Mucosa of descending colon (tissue), 3 donors: ENCODE measurements at regions of chr12 and their contacts with region 1.

Region 1: DNA sequence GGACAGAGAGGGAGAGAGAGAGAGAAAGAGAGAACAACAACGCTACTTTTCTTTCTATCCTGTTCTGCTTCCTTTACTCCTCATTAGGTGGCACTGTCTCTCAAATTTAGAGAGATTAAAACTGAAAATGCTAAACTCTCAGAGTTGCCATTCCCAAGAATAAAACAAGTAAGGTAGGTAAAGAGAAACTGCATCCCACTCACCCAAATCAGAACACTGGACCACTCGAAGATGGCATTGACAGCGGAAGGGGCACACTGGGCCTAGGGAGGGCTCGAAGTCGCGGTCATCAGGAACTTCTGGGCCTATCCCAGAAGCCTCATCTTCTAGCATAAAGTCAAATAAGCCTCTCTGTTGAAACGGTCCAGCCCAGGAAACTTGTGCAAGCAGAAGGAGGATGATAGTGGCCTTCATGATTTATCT is 4.5 kb downstream of the DCN start:
- DNase-seq: no peak
- ATAC-seq: peak; percentile 50
- H3K4me3 ChIP-seq: no peak overlapping the region
- H3K4me1 ChIP-seq: no peaks in the 10 kb centered on the region
- CTCF ChIP-seq: no peak

Region 2: GRCh38 chr12:90896164-90896563 is 282.0 kb before region 1 on chr12:
- intact Hi-C with region 1: no loop called
- DNase-seq: no peak
- ATAC-seq: no peak
- H3K4me3 ChIP-seq: no peak overlapping the region
- H3K4me1 ChIP-seq: no peaks in the 10 kb centered on the region
- CTCF ChIP-seq: no peak

Region 3: DNA sequence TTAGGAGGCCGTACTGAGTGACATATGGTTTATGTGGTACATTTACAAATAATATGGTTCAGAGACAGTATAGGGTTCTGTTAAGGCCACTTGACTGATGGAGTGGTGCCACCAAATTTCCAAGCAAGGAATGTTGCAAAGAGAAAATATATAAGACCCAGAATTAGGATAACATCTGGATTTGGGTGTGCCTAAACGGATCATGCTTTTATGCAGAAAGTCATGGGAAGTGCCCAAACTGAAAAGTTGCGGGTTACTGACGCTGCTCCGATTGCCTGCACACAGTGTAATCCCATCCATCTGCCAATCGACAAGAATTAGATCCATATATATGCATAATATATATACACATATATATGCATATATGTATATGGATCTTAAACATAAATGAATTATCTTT is 142.8 kb after region 1 on chr12:
- intact Hi-C with region 1: loop called (anchors 5 to 10 kb)
- DNase-seq: no peak
- ATAC-seq: no peak
- H3K4me3 ChIP-seq: no peak overlapping the region
- H3K4me1 ChIP-seq: no peaks in the 10 kb centered on the region
- CTCF ChIP-seq: no peak

Region 4: GRCh38 chr12:91326058-91327027 is 148.2 kb after region 1 on chr12:
- intact Hi-C with region 1: loop called (anchors 5 to 10 kb)
- DNase-seq: peak in 1 of 3 donors; percentile 84
- ATAC-seq: no peak
- H3K4me3 ChIP-seq: no peak overlapping the region
- H3K4me1 ChIP-seq: no peaks in the 10 kb centered on the region
- CTCF ChIP-seq: peak; percentile 43